Ovary (tissue), 10 donors: ENCODE measurements at regions of chr18 and their contacts with region 1.

Region 1: GRCh38 chr18:45517181-45517741 is 98.0 kb upstream of the SLC14A2 start:
- DNase-seq: peak in 3 of 5 donors; percentile 25 to 60 (median 36)
- H3K4me3 ChIP-seq: no peak overlapping the region
- H3K27ac ChIP-seq: no peak overlapping the region
- H3K4me1 ChIP-seq: peaks cover 12% of the 10 kb centered on the region
- H3K27me3 ChIP-seq: no peaks in the 10 kb centered on the region
- CTCF ChIP-seq: no peak
- EP300 ChIP-seq: no peak
- POLR2A ChIP-seq: no peak

Region 2: DNA sequence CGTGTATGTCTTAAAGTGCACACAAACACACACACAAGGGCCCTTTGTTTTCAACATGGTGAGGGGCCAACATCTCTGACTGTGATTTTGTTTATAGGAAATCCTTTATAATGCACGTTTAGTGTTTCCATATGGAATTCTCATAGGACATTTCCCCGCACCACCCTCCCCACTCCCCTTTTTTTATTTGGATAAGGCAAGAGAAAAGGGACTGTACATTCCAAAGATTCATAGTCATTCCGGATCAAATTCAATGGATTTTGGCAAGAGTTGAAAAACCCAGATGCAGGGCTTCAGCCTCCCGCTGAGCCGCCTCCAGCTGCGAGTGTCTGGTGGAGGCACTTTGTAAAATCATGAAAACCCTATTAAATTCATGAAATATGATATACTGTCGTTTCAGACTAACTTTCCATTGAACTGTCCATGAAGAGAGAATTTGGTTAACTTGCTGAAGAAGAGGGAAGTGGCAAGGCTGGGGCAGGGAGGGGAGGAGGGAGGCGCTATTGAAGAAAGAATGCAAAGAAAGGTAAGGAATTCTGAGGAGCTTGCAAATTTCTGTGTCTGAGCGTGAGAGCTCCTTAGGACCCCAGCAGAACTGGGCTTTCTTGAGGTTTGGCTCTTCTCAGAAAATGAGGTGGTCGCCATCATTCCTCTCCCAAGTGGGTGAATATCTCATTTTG is 72.2 kb after region 1 on chr18:
- intact Hi-C with region 1: loop called in 1 of 4 experiments (anchors 10 kb)
- DNase-seq: peak in 2 of 5 donors; percentile 12 to 45
- H3K4me3 ChIP-seq: no peak overlapping the region
- H3K27ac ChIP-seq: no peak overlapping the region
- H3K4me1 ChIP-seq: peaks cover 10% of the 10 kb centered on the region
- H3K27me3 ChIP-seq: no peaks in the 10 kb centered on the region
- CTCF ChIP-seq: no peak
- EP300 ChIP-seq: no peak
- POLR2A ChIP-seq: no peak

Region 3: GRCh38 chr18:45621061-45621511 is 103.8 kb after region 1 on chr18:
- intact Hi-C with region 1: no loop called
- DNase-seq: peak in 2 of 5 donors; percentile 44 to 49
- H3K4me3 ChIP-seq: no peak overlapping the region
- H3K27ac ChIP-seq: no peak overlapping the region
- H3K4me1 ChIP-seq: peaks cover 8% of the 10 kb centered on the region
- H3K27me3 ChIP-seq: no peaks in the 10 kb centered on the region
- CTCF ChIP-seq: peak; percentile 22 to 61 (median 51)
- EP300 ChIP-seq: no peak
- POLR2A ChIP-seq: no peak